ENCODE measurements at regions of chr6 and their contacts with region 1.

Region 1: GRCh38 chr6:137811121-137811915 is 55.7 kb upstream of the TNFAIP3 start:
- DNase-seq: peak; percentile 95
- ATAC-seq: peak; percentile 95
- H3K4me3 ChIP-seq: peak overlapping the region; percentile 20
- H3K27ac ChIP-seq: peak overlapping the region; percentile 89
- H3K4me1 ChIP-seq: peaks cover 31% of the 10 kb centered on the region
- H3K27me3 ChIP-seq: no peaks in the 10 kb centered on the region
- CTCF ChIP-seq: no peak
- EP300 ChIP-seq: peak in 1 of 2 experiments; percentile 72; a peak in 2 of 4 replicates
- POLR2A ChIP-seq: peak; percentile 88
- RAD21 ChIP-seq: no peak

Region 2: GRCh38 chr6:137823826-137824555 is 12.7 kb after region 1 on chr6:
- CTCF ChIA-PET with region 1: interaction called, 18 read pairs
- POLR2A ChIA-PET with region 1: interaction called, 95 read pairs
- RAD21 ChIA-PET with region 1: interaction called, 19 read pairs
- SMC1A ChIA-PET with region 1: interaction called, 62 read pairs
- in situ Hi-C with region 1: no loop called
- intact Hi-C with region 1: no loop called
- DNase-seq: no peak
- ATAC-seq: peak; percentile 21
- H3K4me3 ChIP-seq: no peak overlapping the region
- H3K27ac ChIP-seq: no peak overlapping the region; the same call in 1 of the 2 replicates
- H3K4me1 ChIP-seq: peaks cover 32% of the 10 kb centered on the region
- H3K27me3 ChIP-seq: no peaks in the 10 kb centered on the region
- CTCF ChIP-seq: no peak
- EP300 ChIP-seq: no peak
- POLR2A ChIP-seq: no peak
- RAD21 ChIP-seq: no peak

Region 3: DNA sequence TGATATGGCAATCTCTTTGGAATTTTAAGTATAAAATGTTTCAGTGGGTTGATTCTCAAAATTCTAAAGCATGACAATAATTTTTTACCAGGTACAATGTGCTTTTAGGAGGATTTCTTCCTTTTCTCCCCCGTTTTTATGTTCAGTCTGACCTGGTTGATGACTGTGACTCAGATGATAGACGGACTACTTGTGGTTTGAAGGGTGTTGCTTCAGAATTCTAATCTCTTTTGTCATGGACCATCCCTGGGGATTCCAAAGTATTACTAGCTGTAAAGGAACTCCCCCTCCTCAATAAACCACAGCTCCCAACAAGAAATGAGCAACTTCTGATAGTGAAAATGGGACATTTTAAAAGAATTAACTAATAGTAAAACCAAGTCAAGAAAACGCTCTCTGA is 20.8 kb after region 1 on chr6:
- CTCF ChIA-PET with region 1: interaction called, 18 read pairs
- POLR2A ChIA-PET with region 1: interaction called, 95 read pairs
- RAD21 ChIA-PET with region 1: interaction called, 19 read pairs
- SMC1A ChIA-PET with region 1: interaction called, 62 read pairs
- in situ Hi-C with region 1: no loop called
- intact Hi-C with region 1: no loop called
- DNase-seq: no peak
- ATAC-seq: no peak
- H3K4me3 ChIP-seq: no peak overlapping the region
- H3K27ac ChIP-seq: no peak overlapping the region
- H3K4me1 ChIP-seq: peaks cover 42% of the 10 kb centered on the region
- H3K27me3 ChIP-seq: no peaks in the 10 kb centered on the region
- CTCF ChIP-seq: no peak
- EP300 ChIP-seq: no peak
- POLR2A ChIP-seq: no peak
- RAD21 ChIP-seq: no peak

Measured in GM12878 (cell line).